PC-3 (cell line): ENCODE measurements at regions of chr2 and their contacts with region 1.

Region 1: DNA sequence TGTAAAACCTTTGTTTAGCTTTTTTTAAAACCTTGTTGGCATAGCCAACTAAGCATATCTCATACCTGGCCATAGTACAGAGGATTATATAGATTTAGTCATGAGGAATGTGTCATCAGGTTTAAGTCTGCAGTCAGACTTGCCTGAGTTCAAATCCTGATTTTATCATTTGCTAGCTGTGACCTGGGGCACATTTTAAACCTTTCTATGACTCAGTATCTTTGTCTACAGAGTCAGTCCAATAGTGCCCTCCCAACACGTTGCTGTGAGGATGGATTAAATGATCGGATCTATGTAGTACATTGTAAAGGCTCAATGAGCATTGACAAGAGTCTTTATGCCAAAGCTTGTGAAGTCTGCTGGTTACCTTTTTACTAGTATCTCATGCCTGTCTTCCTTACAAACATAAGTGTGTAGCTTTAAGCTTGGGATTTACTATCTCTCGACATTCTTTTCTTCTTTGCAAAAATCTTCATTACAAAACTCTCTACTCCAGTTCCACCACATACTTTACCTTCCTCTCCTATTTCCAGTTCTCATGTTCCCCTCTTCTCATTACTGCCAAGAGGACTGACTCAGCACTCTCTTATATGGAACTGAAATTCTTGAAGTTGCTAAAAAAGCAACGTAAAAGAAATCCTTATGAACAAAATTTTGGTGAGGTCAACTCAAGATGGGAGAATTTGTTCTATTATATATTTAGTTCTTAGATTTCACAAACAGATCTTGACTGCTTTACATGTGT is 68.1 kb upstream of the RBMS1 start:
- DNase-seq: peak; percentile 95
- ATAC-seq: peak; percentile 81
- H3K4me3 ChIP-seq: peak overlapping the region; percentile 28; the same call in 1 of the 2 replicates
- H3K27ac ChIP-seq: peak overlapping the region; percentile 93
- H3K4me1 ChIP-seq: peaks cover 30% of the 10 kb centered on the region
- H3K27me3 ChIP-seq: no peaks in the 10 kb centered on the region
- CTCF ChIP-seq: no peak

Region 2: GRCh38 chr2:159968279-159968900 is 593.3 kb before region 1 on chr2:
- CTCF ChIA-PET with region 1: no interaction called
- POLR2A ChIA-PET with region 1: no interaction called
- intact Hi-C with region 1: no loop called
- DNase-seq: peak; percentile 74
- ATAC-seq: peak; percentile 96
- H3K4me3 ChIP-seq: no peak overlapping the region
- H3K27ac ChIP-seq: no peak overlapping the region
- H3K4me1 ChIP-seq: no peaks in the 10 kb centered on the region
- H3K27me3 ChIP-seq: no peaks in the 10 kb centered on the region
- CTCF ChIP-seq: peak; percentile 80

Region 3: DNA sequence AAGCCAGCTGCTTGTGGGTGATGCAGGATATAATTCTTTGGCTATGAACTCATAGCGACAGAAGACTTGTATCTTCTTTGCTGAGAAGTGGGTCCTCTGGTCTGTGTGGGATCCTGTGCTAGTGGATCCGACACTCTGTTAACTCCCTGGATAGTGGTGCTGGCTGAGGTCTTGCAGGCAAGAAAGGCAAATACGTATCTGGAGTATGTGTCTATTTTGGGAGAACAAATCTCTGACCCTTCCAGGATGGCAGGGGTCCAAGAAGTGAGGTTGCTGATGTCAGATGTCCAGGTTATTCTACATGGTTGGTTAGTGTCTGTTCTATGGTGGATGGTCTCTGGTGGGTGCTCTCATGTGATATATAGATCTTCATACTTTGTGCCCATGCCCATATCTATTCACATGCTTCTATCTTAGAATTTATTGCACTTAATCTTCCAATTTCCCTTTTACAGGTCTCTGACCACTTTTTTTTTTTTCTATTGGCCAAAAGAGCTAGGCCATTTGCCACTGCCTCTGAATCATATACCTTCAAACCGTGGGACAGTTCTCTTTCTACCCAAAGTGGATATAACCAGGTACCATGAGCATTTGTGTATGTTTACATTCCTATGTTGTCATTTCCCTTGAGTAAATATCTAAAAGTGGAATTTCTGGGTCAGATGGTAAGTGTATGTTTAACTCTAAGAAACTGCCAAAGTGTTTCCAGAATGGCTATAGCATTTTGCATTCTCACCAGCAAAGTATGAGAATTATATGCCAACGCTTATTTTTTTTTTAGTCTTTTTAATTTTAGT is 23.0 kb before region 1 on chr2:
- CTCF ChIA-PET with region 1: no interaction called
- POLR2A ChIA-PET with region 1: no interaction called
- intact Hi-C with region 1: loop called (anchors 1 kb)
- DNase-seq: peak; percentile 93
- ATAC-seq: peak; percentile 99
- H3K4me3 ChIP-seq: peak overlapping the region; percentile 22; the same call in 1 of the 2 replicates
- H3K27ac ChIP-seq: peak overlapping the region; percentile 94
- H3K4me1 ChIP-seq: peaks cover 22% of the 10 kb centered on the region
- H3K27me3 ChIP-seq: no peaks in the 10 kb centered on the region
- CTCF ChIP-seq: no peak